BJ (cell line): ENCODE measurements at regions of chr11 and their contacts with region 1.

Region 1: GRCh38 chr11:65888163-65888814 is at the start of gene FIBP:
- DNase-seq: peak; percentile 84
- H3K4me3 ChIP-seq: peak within 1 kb of the TSS; percentile 78
- H3K27me3 ChIP-seq: no peaks in the 10 kb centered on the region
- CTCF ChIP-seq: peak; percentile 92
- polyA plus RNA-seq, gene FIBP: 136 and 199 TPM in 2 replicates

Region 2: GRCh38 chr11:65711785-65712632 is 176.3 kb before region 1 on chr11 and contains the start of gene KAT5:
- CTCF ChIA-PET with region 1: interaction called, 19 read pairs
- POLR2A ChIA-PET with region 1: interaction called, 3 read pairs
- DNase-seq: peak; percentile 85
- H3K4me3 ChIP-seq: peak within 1 kb of the TSS; percentile 71
- H3K27me3 ChIP-seq: no peaks in the 10 kb centered on the region
- CTCF ChIP-seq: peak; percentile 98
- polyA plus RNA-seq, gene KAT5: 31.4 and 50.9 TPM in 2 replicates

Region 3: DNA sequence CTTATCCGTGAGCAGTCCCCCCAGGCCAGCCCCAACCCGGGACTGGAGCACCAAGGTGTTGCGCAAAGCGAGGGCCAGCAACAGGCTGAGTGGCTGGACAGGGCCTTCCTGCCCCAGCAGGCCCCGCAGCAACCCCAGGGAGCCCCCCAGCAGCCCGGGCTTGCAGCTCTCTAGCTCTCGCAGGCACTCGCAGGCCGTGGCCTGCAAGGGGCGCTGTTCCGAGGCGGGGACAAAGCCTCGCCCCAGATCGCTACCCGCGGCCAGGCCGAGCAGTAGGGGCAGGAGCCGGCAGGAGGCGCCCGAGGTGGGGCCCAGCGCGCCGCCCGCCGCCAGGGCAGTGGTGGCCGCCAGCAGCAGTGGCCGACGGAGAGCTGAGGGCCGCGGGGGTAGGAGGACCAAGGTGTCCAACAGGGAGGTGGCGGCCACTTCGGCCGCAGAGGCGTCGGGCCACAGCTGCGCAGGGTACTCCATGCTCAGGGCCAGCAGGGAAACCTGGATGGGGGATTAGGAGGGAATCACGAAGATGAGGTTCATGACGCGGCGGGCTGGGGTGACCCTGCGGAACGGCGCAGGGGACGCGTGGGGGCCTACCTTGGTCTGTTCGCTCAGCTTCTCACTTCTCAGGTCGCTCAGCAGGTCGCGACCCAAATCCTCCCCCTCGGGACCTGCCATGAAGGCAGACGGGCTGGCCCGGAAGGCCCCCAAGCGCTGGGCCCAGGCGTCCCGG is 108.3 kb before region 1 on chr11:
- CTCF ChIA-PET with region 1: interaction called, 10 read pairs
- POLR2A ChIA-PET with region 1: interaction called, 10 read pairs
- DNase-seq: no peak
- H3K4me3 ChIP-seq: peak overlapping the region; percentile 98
- H3K27me3 ChIP-seq: 0 out of 2 replicates have a peak, but pooled peaks cover 1% of the 10 kb centered on the region
- CTCF ChIP-seq: peak; percentile 91

Region 4: GRCh38 chr11:65873318-65874156 is 14.8 kb before region 1 on chr11:
- CTCF ChIA-PET with region 1: interaction called, 68 read pairs
- POLR2A ChIA-PET with region 1: interaction called, 19 read pairs
- DNase-seq: no peak
- H3K4me3 ChIP-seq: peak overlapping the region; percentile 57
- H3K27me3 ChIP-seq: no peaks in the 10 kb centered on the region
- CTCF ChIP-seq: no peak

Region 5: DNA sequence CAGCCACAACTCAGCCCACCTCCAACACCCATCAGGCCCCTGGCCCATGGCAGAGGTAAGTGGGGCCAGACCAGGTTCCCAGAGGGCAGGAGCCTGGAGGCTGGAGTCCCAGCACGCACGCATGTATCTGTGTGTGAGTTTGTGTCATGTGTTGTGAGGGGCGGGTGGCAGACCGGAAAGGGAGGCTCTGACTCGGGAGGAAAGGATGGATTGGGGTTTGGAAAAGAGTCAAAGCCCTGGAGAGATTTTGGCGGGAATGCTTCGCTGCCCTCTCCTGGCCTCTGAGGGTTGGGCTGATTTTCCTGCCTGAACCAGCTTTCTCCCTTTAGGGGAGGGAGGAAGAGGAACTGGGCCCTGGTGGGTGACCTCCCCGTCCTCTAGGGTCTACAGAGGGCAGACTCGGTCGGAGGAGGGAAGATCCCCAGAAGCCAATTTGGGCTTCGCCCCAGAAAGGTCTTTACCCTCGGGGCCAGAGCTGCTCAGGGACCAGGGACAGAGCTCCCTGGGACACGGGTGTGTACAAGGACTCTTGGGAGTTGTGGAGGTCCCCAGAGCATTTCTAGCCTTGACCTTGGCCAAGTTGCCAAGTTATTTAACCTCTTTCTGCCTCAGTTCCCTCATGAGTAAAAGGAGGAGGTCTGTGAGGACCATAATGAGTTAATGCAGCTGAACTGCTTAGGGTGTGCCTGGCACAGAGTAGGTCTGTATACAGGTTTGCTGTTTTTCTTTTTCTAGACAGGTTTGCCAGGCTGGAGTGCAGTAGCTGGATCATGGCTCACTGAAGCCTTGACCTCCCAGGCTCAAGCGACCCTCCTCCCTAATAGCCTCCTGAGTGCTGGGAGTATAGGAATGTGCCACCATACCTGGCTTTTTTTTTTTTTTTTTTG is 23.6 kb after region 1 on chr11:
- CTCF ChIA-PET with region 1: interaction called, 60 read pairs
- POLR2A ChIA-PET with region 1: interaction called, 6 read pairs
- DNase-seq: peak; percentile 67
- H3K4me3 ChIP-seq: no peak overlapping the region
- H3K27me3 ChIP-seq: no peaks in the 10 kb centered on the region
- CTCF ChIP-seq: peak; percentile 37

Region 6: GRCh38 chr11:65953513-65953912 is 65.2 kb after region 1 on chr11:
- CTCF ChIA-PET with region 1: no interaction called
- POLR2A ChIA-PET with region 1: no interaction called
- DNase-seq: no peak
- H3K4me3 ChIP-seq: no peak overlapping the region
- H3K27me3 ChIP-seq: 0 out of 2 replicates have a peak, but pooled peaks cover 2% of the 10 kb centered on the region
- CTCF ChIP-seq: no peak

Region 7: GRCh38 chr11:65981972-65982823 is 93.9 kb after region 1 on chr11:
- CTCF ChIA-PET with region 1: interaction called, 87 read pairs
- POLR2A ChIA-PET with region 1: no interaction called
- DNase-seq: no peak
- H3K4me3 ChIP-seq: no peak overlapping the region
- H3K27me3 ChIP-seq: no peaks in the 10 kb centered on the region
- CTCF ChIP-seq: no peak

Region 8: DNA sequence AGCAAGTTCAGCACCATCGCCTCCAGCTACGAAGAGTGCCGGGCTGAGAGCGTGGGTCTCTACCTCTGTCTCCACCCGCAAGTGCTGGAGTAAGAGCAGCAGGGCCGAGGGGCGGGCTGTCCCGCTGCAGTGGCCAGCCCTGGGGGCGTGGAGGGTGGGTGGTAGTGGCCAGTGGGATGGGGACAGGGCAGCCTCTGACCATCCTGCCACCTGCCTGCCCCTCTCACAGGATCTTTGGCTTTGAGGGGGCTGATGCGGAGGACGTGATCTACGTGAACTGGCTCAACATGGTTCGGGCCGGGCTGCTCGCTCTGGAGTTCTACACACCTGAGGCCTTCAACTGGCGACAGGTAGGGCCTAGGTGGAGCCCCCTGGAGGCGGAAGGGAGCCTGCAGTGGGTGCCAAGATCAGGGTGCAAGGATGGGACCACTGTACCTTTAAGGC is 607.1 kb after region 1 on chr11:
- CTCF ChIA-PET with region 1: no interaction called
- POLR2A ChIA-PET with region 1: no interaction called
- DNase-seq: no peak
- H3K4me3 ChIP-seq: no peak overlapping the region
- H3K27me3 ChIP-seq: no peaks in the 10 kb centered on the region
- CTCF ChIP-seq: peak; percentile 24; the same call in 1 of the 2 replicates